CD8-positive, alpha-beta T cell (primary cell): ENCODE measurements at regions of chr12 and their contacts with region 1.

Region 1: DNA sequence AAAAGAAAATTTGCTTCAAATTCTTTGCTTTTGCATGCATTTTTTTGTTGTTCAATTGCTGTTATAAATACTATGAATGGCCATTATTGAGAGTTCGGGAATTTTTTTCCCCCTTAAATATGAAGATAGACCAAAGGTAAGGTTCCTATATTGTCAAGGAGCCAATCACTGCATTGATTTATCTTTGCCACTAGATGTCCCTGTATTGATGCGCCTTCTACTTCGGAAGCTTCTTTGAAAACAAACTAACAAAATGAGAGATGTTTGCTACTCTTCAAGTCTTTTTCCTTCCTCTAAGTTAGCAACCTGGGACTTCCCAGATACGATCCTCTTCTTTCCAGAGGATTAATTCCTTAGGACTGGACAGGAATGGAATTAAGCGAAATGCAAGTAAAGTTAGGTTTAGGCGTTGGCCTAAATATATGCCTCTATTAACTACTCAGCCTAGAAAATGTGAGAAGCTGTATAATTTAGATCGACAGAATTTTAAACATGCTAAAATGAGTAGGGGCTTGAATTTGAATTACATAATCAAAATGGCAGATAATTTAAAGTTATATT is 318.1 kb downstream of the AEBP2 start:
- DNase-seq: peak in 2 of 9 experiments; percentile 14 to 23
- ATAC-seq: no peak
- H3K4me3 ChIP-seq: no peak overlapping the region
- H3K4me3 Mint-ChIP-seq: no peak overlapping the region
- H3K27ac ChIP-seq: no peak overlapping the region
- H3K27ac Mint-ChIP-seq: no peak overlapping the region
- H3K4me1 ChIP-seq: no peaks in the 10 kb centered on the region
- H3K4me1 Mint-ChIP-seq: no peaks in the 10 kb centered on the region
- H3K27me3 ChIP-seq: no peaks in the 10 kb centered on the region
- H3K27me3 Mint-ChIP-seq: no peaks in the 10 kb centered on the region
- CTCF ChIP-seq: peak; percentile 10

Region 2: DNA sequence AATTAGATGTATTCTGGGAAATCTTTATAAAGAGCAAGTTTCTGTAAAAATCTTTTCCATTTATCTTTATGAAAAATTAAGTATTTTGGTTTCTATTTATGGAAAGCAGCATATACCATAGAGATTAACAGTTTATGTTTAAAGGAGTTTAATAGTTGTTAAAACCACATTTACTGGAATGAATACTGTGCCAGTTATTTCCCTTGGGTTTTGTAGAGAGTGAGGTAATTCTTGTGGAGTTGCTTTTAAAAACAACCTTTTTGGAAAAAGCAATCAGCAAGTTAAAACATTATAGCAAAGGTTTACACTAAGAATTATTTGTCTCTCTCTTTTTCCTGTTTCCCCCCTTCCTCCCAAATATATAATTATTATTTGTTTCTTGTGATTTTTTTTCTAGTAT is 283.2 kb before region 1 on chr12:
- CTCF ChIA-PET with region 1: no interaction called
- POLR2A ChIA-PET with region 1: no interaction called
- intact Hi-C with region 1: no loop called
- DNase-seq: no peak
- ATAC-seq: no peak
- H3K4me3 ChIP-seq: no peak overlapping the region
- H3K4me3 Mint-ChIP-seq: no peak overlapping the region
- H3K27ac ChIP-seq: no peak overlapping the region
- H3K27ac Mint-ChIP-seq: no peak overlapping the region
- H3K4me1 ChIP-seq: no peaks in the 10 kb centered on the region
- H3K4me1 Mint-ChIP-seq: peaks cover 49% of the 10 kb centered on the region
- H3K27me3 ChIP-seq: no peaks in the 10 kb centered on the region
- H3K27me3 Mint-ChIP-seq: no peaks in the 10 kb centered on the region
- CTCF ChIP-seq: no peak

Region 3: DNA sequence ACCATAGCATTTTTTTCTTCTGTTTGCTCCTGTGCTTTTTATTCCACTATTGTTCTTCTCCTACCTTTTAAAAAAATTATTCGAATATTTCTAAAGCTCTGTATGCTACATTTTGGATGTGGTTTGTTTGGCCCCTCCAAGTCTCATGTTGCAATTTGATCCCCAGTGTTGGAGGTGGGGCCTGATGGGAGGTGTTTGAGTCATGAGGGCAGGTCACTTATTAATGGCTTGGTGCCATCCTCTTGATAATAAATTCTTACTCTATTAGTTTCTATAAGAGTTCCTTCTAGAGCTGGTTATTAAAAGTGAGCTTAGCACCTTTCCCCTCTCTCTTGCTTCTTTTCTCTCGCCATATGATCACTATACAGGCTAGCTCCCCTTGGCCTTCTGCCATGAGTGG is 165.3 kb after region 1 on chr12:
- CTCF ChIA-PET with region 1: no interaction called
- POLR2A ChIA-PET with region 1: no interaction called
- intact Hi-C with region 1: no loop called
- DNase-seq: no peak
- ATAC-seq: no peak
- H3K4me3 ChIP-seq: no peak overlapping the region
- H3K4me3 Mint-ChIP-seq: no peak overlapping the region
- H3K27ac ChIP-seq: no peak overlapping the region
- H3K27ac Mint-ChIP-seq: no peak overlapping the region
- H3K4me1 ChIP-seq: no peaks in the 10 kb centered on the region
- H3K4me1 Mint-ChIP-seq: no peaks in the 10 kb centered on the region
- H3K27me3 ChIP-seq: no peaks in the 10 kb centered on the region
- H3K27me3 Mint-ChIP-seq: peaks cover 3% of the 10 kb centered on the region
- CTCF ChIP-seq: no peak

Region 4: GRCh38 chr12:21169878-21170472 is 1412.6 kb after region 1 on chr12:
- CTCF ChIA-PET with region 1: no interaction called
- POLR2A ChIA-PET with region 1: no interaction called
- intact Hi-C with region 1: loop called in 1 of 2 experiments (anchors 10 kb)
- DNase-seq: peak in 3 of 9 experiments; percentile 17 to 27 (median 20)
- ATAC-seq: no peak
- H3K4me3 ChIP-seq: no peak overlapping the region
- H3K4me3 Mint-ChIP-seq: no peak overlapping the region
- H3K27ac ChIP-seq: no peak overlapping the region
- H3K27ac Mint-ChIP-seq: no peak overlapping the region
- H3K4me1 ChIP-seq: no peaks in the 10 kb centered on the region
- H3K4me1 Mint-ChIP-seq: no peaks in the 10 kb centered on the region
- H3K27me3 ChIP-seq: no peaks in the 10 kb centered on the region
- H3K27me3 Mint-ChIP-seq: no peaks in the 10 kb centered on the region
- CTCF ChIP-seq: peak; percentile 35